ENCODE measurements at regions of chr7 and their contacts with region 1.

Region 1: GRCh38 chr7:38565289-38565688 is 65.9 kb downstream of the AMPH start:
- DNase-seq: no peak
- ATAC-seq: no peak
- H3K4me3 ChIP-seq: no peak overlapping the region
- H3K4me3 Mint-ChIP-seq: no peak overlapping the region
- H3K27ac ChIP-seq: no peak overlapping the region
- H3K27ac Mint-ChIP-seq: no peak overlapping the region
- H3K4me1 ChIP-seq: no peaks in the 10 kb centered on the region
- H3K4me1 Mint-ChIP-seq: no peaks in the 10 kb centered on the region
- H3K27me3 ChIP-seq: no peaks in the 10 kb centered on the region
- H3K27me3 Mint-ChIP-seq: peaks cover 0 to 17% (median 12%) of the 10 kb centered on the region in 5 donors

Region 2: GRCh38 chr7:38607466-38607865 is 42.2 kb after region 1 on chr7:
- CTCF ChIA-PET with region 1: no interaction called
- POLR2A ChIA-PET with region 1: no interaction called
- intact Hi-C with region 1: loop called in 1 of 2 experiments (anchors 1 kb)
- DNase-seq: no peak
- ATAC-seq: no peak
- H3K4me3 ChIP-seq: no peak overlapping the region
- H3K4me3 Mint-ChIP-seq: no peak overlapping the region
- H3K27ac ChIP-seq: no peak overlapping the region
- H3K27ac Mint-ChIP-seq: no peak overlapping the region
- H3K4me1 ChIP-seq: no peaks in the 10 kb centered on the region
- H3K4me1 Mint-ChIP-seq: no peaks in the 10 kb centered on the region
- H3K27me3 ChIP-seq: no peaks in the 10 kb centered on the region
- H3K27me3 Mint-ChIP-seq: peaks cover 8 to 24% (median 18%) of the 10 kb centered on the region in 5 donors

Region 3: GRCh38 chr7:39248041-39248691 is 682.9 kb after region 1 on chr7:
- CTCF ChIA-PET with region 1: no interaction called
- POLR2A ChIA-PET with region 1: no interaction called
- intact Hi-C with region 1: no loop called
- DNase-seq: no peak
- ATAC-seq: no peak
- H3K4me3 ChIP-seq: no peak overlapping the region
- H3K4me3 Mint-ChIP-seq: no peak overlapping the region
- H3K27ac ChIP-seq: no peak overlapping the region
- H3K27ac Mint-ChIP-seq: no peak overlapping the region
- H3K4me1 ChIP-seq: no peaks in the 10 kb centered on the region
- H3K4me1 Mint-ChIP-seq: no peaks in the 10 kb centered on the region
- H3K27me3 ChIP-seq: no peaks in the 10 kb centered on the region
- H3K27me3 Mint-ChIP-seq: peaks cover 0 to 17% (median 6%) of the 10 kb centered on the region in 5 donors